ENCODE measurements at regions of chr7 and their contacts with region 1.

Region 1: GRCh38 chr7:73738612-73739374 is at the start of gene ABHD11:
- DNase-seq: peak; percentile 99
- ATAC-seq: peak; percentile 86
- H3K4me3 Mint-ChIP-seq: peak within 1 kb of the TSS; percentile 91
- H3K27ac Mint-ChIP-seq: peak within 1 kb of the TSS; percentile 93
- H3K4me1 Mint-ChIP-seq: peaks cover 19% of the 10 kb centered on the region
- H3K27me3 Mint-ChIP-seq: no peaks in the 10 kb centered on the region
- total RNA-seq, gene ABHD11: 14.4 to 17.8 TPM

Region 2: GRCh38 chr7:73395538-73396503 is 343.0 kb before region 1 on chr7:
- CTCF ChIA-PET with region 1: no interaction called
- POLR2A ChIA-PET with region 1: no interaction called
- intact Hi-C with region 1: no loop called
- DNase-seq: no peak
- ATAC-seq: no peak
- H3K4me3 Mint-ChIP-seq: no peak overlapping the region
- H3K27ac Mint-ChIP-seq: no peak overlapping the region
- H3K4me1 Mint-ChIP-seq: no peaks in the 10 kb centered on the region
- H3K27me3 Mint-ChIP-seq: peaks cover 5% of the 10 kb centered on the region

Region 3: GRCh38 chr7:73522105-73522872 is 216.5 kb before region 1 on chr7 and contains the start of gene BAZ1B:
- CTCF ChIA-PET with region 1: no interaction called
- POLR2A ChIA-PET with region 1: interaction called, 3 read pairs
- intact Hi-C with region 1: loop called in 1 of 2 experiments (anchors 1 kb)
- DNase-seq: peak; percentile 99
- ATAC-seq: peak; percentile 95
- H3K4me3 Mint-ChIP-seq: peak within 1 kb of the TSS; percentile 99
- H3K27ac Mint-ChIP-seq: peak within 1 kb of the TSS; percentile 98
- H3K4me1 Mint-ChIP-seq: peaks cover 53% of the 10 kb centered on the region
- H3K27me3 Mint-ChIP-seq: no peaks in the 10 kb centered on the region
- total RNA-seq, gene BAZ1B: 90.2 to 98.6 TPM

Region 4: GRCh38 chr7:73606801-73607691 is 131.7 kb before region 1 on chr7:
- CTCF ChIA-PET with region 1: interaction called, 56 read pairs
- POLR2A ChIA-PET with region 1: no interaction called
- intact Hi-C with region 1: loop called (anchors 1 to 2 kb)
- DNase-seq: peak; percentile 80
- ATAC-seq: peak; percentile 83
- H3K4me3 Mint-ChIP-seq: no peak overlapping the region
- H3K27ac Mint-ChIP-seq: no peak overlapping the region
- H3K4me1 Mint-ChIP-seq: no peaks in the 10 kb centered on the region
- H3K27me3 Mint-ChIP-seq: peaks cover 10% of the 10 kb centered on the region

Region 5: GRCh38 chr7:73683056-73683964 is 55.5 kb before region 1 on chr7 and contains the starts of genes BUD23 and DNAJC30:
- CTCF ChIA-PET with region 1: interaction called, 3 read pairs
- POLR2A ChIA-PET with region 1: no interaction called
- intact Hi-C with region 1: loop called in 1 of 2 experiments (anchors 1 kb)
- DNase-seq: peak; percentile 99
- ATAC-seq: peak; percentile 98
- H3K4me3 Mint-ChIP-seq: peak within 1 kb of the TSS; percentile 89
- H3K27ac Mint-ChIP-seq: peak within 1 kb of the TSS; percentile 96
- H3K4me1 Mint-ChIP-seq: peaks cover 41% of the 10 kb centered on the region
- H3K27me3 Mint-ChIP-seq: no peaks in the 10 kb centered on the region
- total RNA-seq, gene BUD23: 71.4 to 95.5 TPM
- total RNA-seq, gene DNAJC30: 6.9 to 7.8 TPM

Region 6: GRCh38 chr7:73851410-73852234 is 112.8 kb after region 1 on chr7:
- CTCF ChIA-PET with region 1: interaction called, 4 read pairs
- POLR2A ChIA-PET with region 1: no interaction called
- intact Hi-C with region 1: loop called (anchors 1 to 2 kb)
- DNase-seq: peak; percentile 60
- ATAC-seq: peak; percentile 96
- H3K4me3 Mint-ChIP-seq: no peak overlapping the region
- H3K27ac Mint-ChIP-seq: peak overlapping the region; percentile 65
- H3K4me1 Mint-ChIP-seq: peaks cover 33% of the 10 kb centered on the region
- H3K27me3 Mint-ChIP-seq: peaks cover 12% of the 10 kb centered on the region

Region 7: GRCh38 chr7:74254129-74254857 is 515.5 kb after region 1 on chr7 and contains the start of gene RFC2:
- CTCF ChIA-PET with region 1: no interaction called
- POLR2A ChIA-PET with region 1: no interaction called
- intact Hi-C with region 1: loop called in 1 of 2 experiments (anchors 1 kb)
- DNase-seq: peak; percentile 98
- ATAC-seq: peak; percentile 96
- H3K4me3 Mint-ChIP-seq: peak within 1 kb of the TSS; percentile 98
- H3K27ac Mint-ChIP-seq: peak within 1 kb of the TSS; percentile 96
- H3K4me1 Mint-ChIP-seq: peaks cover 18% of the 10 kb centered on the region
- H3K27me3 Mint-ChIP-seq: no peaks in the 10 kb centered on the region
- total RNA-seq, gene RFC2: 84.9 to 123 TPM

Measured in activated CD4-positive, alpha-beta T cell treated with anti-CD3 and anti-CD28 coated beads for 36 hours (primary cell).